ENCODE measurements at regions of chr14 and their contacts with region 1.

Region 1: GRCh38 chr14:68248481-68249255 is 429.1 kb downstream of the RAD51B start:
- DNase-seq: peak; percentile 52
- CTCF ChIP-seq: peak; percentile 14

Region 2: GRCh38 chr14:68816262-68816942 is 567.7 kb after region 1 on chr14:
- in situ Hi-C with region 1: loop called (anchors 5 kb)
- DNase-seq: peak; percentile 90
- CTCF ChIP-seq: peak; percentile 86

Region 3: DNA sequence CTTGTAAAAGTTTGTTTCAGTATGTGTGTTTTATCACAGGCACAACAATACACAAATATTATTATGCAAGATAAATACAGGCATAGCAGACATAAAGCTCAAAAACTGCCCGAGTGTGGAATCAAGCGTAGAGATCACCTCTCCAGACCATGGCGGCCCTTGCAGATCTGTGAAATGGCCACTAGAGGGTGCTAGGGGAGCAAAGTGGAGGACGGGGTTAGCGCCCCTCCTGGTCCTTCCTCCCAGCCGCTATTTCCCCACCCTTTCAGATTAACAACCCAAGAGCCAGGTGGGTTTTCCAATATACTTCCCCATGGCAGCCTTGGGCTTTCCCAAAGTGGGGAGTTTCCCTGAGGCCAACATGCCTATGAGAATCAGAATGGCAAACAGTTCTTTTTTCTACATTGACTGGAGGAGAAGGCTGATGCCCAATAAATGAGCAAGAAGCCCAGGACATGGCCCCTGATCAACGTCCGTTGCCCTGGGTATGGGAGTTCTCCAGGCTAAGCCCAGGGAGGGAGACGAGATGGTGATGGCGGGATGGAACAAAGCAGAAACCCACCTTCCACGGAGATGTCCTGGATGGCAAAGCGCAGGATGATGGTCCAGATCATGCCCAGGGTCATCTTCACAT is 663.0 kb after region 1 on chr14:
- in situ Hi-C with region 1: no loop called
- DNase-seq: peak; percentile 88
- CTCF ChIP-seq: peak; percentile 91